ENCODE measurements at regions of chr18 and their contacts with region 1.

Region 1: GRCh38 chr18:23730857-23731256 is 41.6 kb downstream of the LAMA3 start:
- DNase-seq: no peak
- ATAC-seq: no peak
- H3K4me3 ChIP-seq: no peak overlapping the region
- H3K27ac ChIP-seq: no peak overlapping the region
- H3K4me1 ChIP-seq: no peaks in the 10 kb centered on the region
- H3K27me3 ChIP-seq: no peaks in the 10 kb centered on the region
- CTCF ChIP-seq: no peak

Region 2: DNA sequence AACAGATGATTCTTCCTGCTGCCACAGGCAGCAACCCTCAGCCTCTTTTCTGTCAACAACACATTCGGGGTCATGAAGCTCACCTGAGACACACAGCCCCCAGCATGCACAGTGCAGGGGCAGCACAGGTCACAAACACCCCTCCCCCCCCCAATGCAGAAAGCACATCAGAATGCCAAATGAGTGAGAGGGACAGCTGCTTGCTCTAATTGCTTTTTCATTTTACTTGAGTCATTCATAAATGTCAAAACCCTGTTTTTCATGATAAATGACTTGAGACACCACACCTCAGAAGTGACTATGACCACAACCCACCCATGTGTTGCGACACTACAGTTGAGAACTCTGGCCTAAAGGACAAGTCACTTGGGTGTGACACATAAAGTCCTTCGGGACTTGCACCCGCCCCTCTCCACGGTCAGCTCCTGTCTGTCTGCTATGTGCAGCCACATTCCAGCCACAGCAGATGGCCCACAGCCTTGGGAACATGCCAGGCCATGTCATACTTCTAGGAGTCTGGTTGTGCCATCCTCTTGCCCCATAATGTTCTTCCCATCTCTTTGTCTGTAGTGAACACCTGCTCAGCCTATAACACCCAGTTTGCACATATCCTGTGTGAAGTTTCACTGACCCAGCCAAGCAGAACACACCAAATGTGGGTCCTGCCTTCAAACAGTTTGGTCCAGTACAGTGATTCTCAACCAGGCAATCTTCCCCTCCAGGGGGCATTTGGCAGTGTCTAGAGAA is 308.0 kb before region 1 on chr18:
- CTCF ChIA-PET with region 1: no interaction called
- POLR2A ChIA-PET with region 1: no interaction called
- in situ Hi-C with region 1: no loop called
- intact Hi-C with region 1: no loop called
- DNase-seq: no peak
- ATAC-seq: no peak; the same call in 1 of the 2 replicates
- H3K4me3 ChIP-seq: no peak overlapping the region
- H3K27ac ChIP-seq: no peak overlapping the region
- H3K4me1 ChIP-seq: no peaks in the 10 kb centered on the region
- H3K27me3 ChIP-seq: no peaks in the 10 kb centered on the region
- CTCF ChIP-seq: no peak

Region 3: GRCh38 chr18:23573626-23574431 is 157.0 kb before region 1 on chr18:
- CTCF ChIA-PET with region 1: no interaction called
- POLR2A ChIA-PET with region 1: interaction called, 12 read pairs
- in situ Hi-C with region 1: no loop called
- intact Hi-C with region 1: no loop called
- DNase-seq: peak; percentile 17
- ATAC-seq: no peak
- H3K4me3 ChIP-seq: no peak overlapping the region
- H3K27ac ChIP-seq: no peak overlapping the region
- H3K4me1 ChIP-seq: no peaks in the 10 kb centered on the region
- H3K27me3 ChIP-seq: no peaks in the 10 kb centered on the region
- CTCF ChIP-seq: no peak

Region 4: DNA sequence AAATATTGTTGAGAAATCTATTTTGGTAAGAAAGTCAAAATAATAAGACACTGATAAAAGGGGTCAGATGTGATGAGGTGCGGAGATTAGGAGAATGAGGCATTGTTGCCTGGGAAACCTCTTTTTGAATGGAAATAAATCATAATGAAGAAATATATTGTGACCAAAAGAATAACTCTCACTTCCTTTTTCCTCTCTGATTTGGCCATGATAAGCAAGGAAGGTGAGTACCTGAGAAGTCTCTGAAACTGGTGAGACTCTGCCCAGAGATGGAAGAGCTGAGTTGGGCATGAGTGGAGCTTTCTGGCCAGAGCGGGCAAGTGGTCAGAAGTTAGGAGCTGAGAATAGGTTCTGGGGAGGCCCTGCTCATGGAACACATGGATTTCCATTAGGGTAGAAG is 29.8 kb before region 1 on chr18:
- CTCF ChIA-PET with region 1: no interaction called
- POLR2A ChIA-PET with region 1: no interaction called
- in situ Hi-C with region 1: no loop called
- intact Hi-C with region 1: no loop called
- DNase-seq: no peak
- ATAC-seq: no peak
- H3K4me3 ChIP-seq: no peak overlapping the region
- H3K27ac ChIP-seq: no peak overlapping the region
- H3K4me1 ChIP-seq: no peaks in the 10 kb centered on the region
- H3K27me3 ChIP-seq: no peaks in the 10 kb centered on the region; the same call in 1 of the 2 replicates
- CTCF ChIP-seq: no peak

Region 5: DNA sequence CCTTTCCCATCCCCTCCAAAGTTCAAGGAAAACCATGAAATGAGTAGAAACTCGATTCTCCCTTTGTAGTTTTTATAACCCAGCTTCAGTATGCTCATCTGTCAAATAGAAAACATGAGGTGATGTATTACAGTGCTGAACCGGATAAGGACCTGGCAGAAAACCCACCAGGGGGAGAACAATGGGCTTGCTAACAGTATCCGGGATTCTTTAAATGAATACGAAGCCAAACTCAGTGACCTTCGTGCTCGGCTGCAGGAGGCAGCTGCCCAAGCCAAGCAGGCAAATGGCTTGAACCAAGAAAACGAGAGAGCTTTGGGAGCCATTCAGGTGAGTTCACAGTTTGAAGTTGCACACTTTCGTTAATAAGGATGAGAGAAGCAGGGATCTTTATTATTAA is 170.1 kb after region 1 on chr18:
- CTCF ChIA-PET with region 1: no interaction called
- POLR2A ChIA-PET with region 1: no interaction called
- in situ Hi-C with region 1: no loop called
- intact Hi-C with region 1: no loop called
- DNase-seq: no peak
- ATAC-seq: no peak
- H3K4me3 ChIP-seq: no peak overlapping the region
- H3K27ac ChIP-seq: no peak overlapping the region
- H3K4me1 ChIP-seq: no peaks in the 10 kb centered on the region
- H3K27me3 ChIP-seq: peaks cover 13% of the 10 kb centered on the region; the same call in 1 of the 2 replicates
- CTCF ChIP-seq: no peak

Measured in Panc1 (cell line).